ENCODE measurements at regions of chr4 and their contacts with region 1.

Region 1: GRCh38 chr4:121726642-121727268 is 30.0 kb upstream of the ANXA5 start:
- DNase-seq: peak; percentile 61
- ATAC-seq: peak; percentile 95
- H3K4me3 ChIP-seq: no peak overlapping the region
- H3K27ac ChIP-seq: no peak overlapping the region
- H3K4me1 ChIP-seq: peaks cover 0 to 20% of the 10 kb centered on the region in 2 experiments; a peak in 2 of 4 replicates
- H3K27me3 ChIP-seq: no peaks in the 10 kb centered on the region
- CTCF ChIP-seq: peak; percentile 54 to 79 (median 65); a peak in 5 of 6 replicates
- POLR2A ChIP-seq: no peak
- RAD21 ChIP-seq: peak; percentile 82

Region 2: DNA sequence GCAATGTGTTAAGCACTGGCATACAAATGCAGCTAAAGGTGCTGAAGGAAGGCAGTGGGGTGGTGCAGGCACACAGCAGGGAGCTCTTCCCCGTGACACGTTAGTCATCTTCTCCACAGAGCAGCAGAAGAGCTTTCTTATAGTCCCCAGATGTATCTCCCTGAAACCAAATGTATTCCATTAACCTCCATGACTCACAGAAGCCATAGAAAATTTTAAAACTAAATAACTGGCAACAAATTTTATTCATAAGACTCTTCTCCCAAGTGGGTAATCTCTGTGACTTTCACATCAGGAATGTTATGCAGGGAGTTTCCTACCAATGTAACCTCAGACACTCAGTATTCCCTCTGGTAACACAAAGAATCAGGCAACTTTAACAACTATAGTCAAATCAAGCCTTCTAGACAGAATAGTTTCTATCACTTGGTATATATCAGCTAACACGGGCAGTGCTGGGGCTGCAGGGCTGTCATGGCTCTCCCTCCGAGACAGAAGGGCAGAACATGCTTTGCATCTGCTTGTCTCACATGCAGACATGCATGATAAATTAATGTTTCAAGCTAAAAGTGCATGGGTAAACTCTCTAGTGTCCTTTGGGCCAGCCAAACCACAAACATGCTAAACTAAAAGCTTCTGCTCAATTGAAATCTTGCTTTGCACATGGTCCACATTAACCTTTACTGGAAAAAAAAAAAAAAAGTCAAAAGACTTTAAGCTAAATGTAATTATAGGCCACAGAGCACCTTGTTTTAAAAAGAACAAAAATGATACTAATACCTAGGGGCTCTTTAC is 58.2 kb before region 1 on chr4:
- CTCF ChIA-PET with region 1: no interaction called
- POLR2A ChIA-PET with region 1: no interaction called
- RAD21 ChIA-PET with region 1: no interaction called
- intact Hi-C with region 1: loop called (anchors 5 kb)
- DNase-seq: no peak
- ATAC-seq: no peak
- H3K4me3 ChIP-seq: no peak overlapping the region
- H3K27ac ChIP-seq: no peak overlapping the region
- H3K4me1 ChIP-seq: no peaks in the 10 kb centered on the region
- H3K27me3 ChIP-seq: no peaks in the 10 kb centered on the region
- CTCF ChIP-seq: no peak
- POLR2A ChIP-seq: no peak
- RAD21 ChIP-seq: no peak

Region 3: GRCh38 chr4:123461996-123462395 is 1735.2 kb after region 1 on chr4:
- CTCF ChIA-PET with region 1: no interaction called
- POLR2A ChIA-PET with region 1: no interaction called
- RAD21 ChIA-PET with region 1: no interaction called
- intact Hi-C with region 1: no loop called
- DNase-seq: no peak
- ATAC-seq: no peak
- H3K4me3 ChIP-seq: no peak overlapping the region
- H3K27ac ChIP-seq: no peak overlapping the region
- H3K4me1 ChIP-seq: no peaks in the 10 kb centered on the region
- H3K27me3 ChIP-seq: no peaks in the 10 kb centered on the region
- CTCF ChIP-seq: no peak
- POLR2A ChIP-seq: no peak
- RAD21 ChIP-seq: no peak